ENCODE measurements at regions of chr4 and their contacts with region 1.

Region 1: DNA sequence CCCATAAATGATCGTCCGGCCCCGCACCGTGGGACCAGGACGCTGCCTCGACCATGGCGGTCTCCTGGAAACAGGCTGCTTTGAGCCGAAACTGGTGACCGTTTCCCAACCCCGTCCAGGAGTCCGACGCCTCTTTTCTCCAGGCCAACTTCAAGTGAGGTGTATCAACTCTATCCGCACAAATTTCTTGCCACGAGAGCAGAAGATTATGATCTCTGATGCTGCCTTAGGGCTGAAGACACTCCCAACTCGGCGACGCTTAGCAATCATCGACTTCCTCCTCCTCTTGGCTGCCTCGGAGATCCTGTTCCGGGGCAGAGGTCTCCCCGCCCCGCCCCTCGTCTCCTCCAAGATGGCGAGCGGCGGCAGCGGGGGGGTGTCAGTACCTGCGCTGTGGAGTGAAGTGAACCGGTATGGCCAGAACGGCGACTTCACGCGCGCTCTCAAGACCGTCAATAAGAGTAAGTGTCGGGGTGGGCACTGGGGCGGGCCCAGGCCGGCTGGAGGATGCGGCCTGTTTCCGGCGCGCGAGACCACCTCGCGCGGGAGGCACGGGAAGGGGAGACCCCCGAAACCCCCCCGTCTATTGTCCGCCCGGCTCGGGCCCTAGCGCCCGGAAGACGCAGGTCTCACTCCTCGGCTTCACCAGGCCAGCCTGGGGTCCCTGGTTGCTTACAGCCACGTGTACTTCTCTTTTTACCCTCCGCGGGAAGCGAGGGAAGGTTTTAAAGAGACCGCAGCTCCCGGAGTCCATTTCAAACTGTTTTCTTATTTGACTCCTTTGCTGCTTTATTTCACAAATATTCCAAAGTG is at the start of gene SRP72:
- DNase-seq: peak; percentile 91 to 92
- H3K4me3 ChIP-seq: peak within 1 kb of the TSS; percentile 78 to 99
- H3K27ac ChIP-seq: peak within 1 kb of the TSS; percentile 88 to 93
- H3K4me1 ChIP-seq: peaks cover 0 to 40% (median 24%) of the 10 kb centered on the region in 4 donors
- H3K27me3 ChIP-seq: no peaks in the 10 kb centered on the region
- CTCF ChIP-seq: no peak

Region 2: DNA sequence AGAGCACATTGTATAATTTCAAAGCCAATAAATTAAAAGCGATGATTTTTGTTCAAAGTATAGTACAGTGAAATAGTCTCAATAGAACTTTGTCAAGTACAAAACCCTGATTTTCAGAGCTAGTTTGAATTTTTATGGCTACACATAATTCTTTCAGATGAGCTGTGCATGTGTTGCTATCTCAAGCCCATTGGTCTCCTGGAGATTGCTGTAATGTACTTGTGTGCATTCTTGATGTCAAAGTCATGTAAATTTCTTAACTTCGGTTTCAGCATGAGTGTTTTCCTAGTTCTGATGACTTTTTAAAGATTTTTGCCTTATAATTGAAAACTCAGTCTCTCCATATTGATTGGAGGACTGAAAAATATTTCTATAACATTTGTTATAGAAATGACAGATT is 317.9 kb before region 1 on chr4:
- intact Hi-C with region 1: no loop called
- DNase-seq: no peak
- H3K4me3 ChIP-seq: no peak overlapping the region
- H3K27ac ChIP-seq: no peak overlapping the region
- H3K4me1 ChIP-seq: peaks cover 0 to 6% (median 0%) of the 10 kb centered on the region in 4 donors
- H3K27me3 ChIP-seq: no peaks in the 10 kb centered on the region
- CTCF ChIP-seq: no peak

Region 3: GRCh38 chr4:56410235-56411062 is 57.0 kb before region 1 on chr4:
- intact Hi-C with region 1: loop called (anchors 10 kb)
- DNase-seq: peak in 1 of 2 donors; percentile 51
- H3K4me3 ChIP-seq: peak overlapping the region; percentile 37 to 38
- H3K27ac ChIP-seq: peak overlapping the region; percentile 46 to 60
- H3K4me1 ChIP-seq: peaks cover 0 to 20% (median 5%) of the 10 kb centered on the region in 4 donors
- H3K27me3 ChIP-seq: no peaks in the 10 kb centered on the region
- CTCF ChIP-seq: no peak

Region 4: GRCh38 chr4:56435306-56435926 is 32.1 kb before region 1 on chr4 and contains the start of gene PPAT:
- intact Hi-C with region 1: loop called (anchors 2 kb)
- DNase-seq: peak; percentile 97 to 99
- H3K4me3 ChIP-seq: peak within 1 kb of the TSS; percentile 80 to 82
- H3K27ac ChIP-seq: peak within 1 kb of the TSS; percentile 84 to 92
- H3K4me1 ChIP-seq: peaks cover 0 to 22% (median 10%) of the 10 kb centered on the region in 4 donors
- H3K27me3 ChIP-seq: no peaks in the 10 kb centered on the region
- CTCF ChIP-seq: peak in 1 of 2 experiments; percentile 46

Region 5: GRCh38 chr4:56813358-56813757 is 345.9 kb after region 1 on chr4:
- intact Hi-C with region 1: no loop called
- DNase-seq: no peak
- H3K4me3 ChIP-seq: no peak overlapping the region
- H3K27ac ChIP-seq: no peak overlapping the region
- H3K4me1 ChIP-seq: no peaks in the 10 kb centered on the region
- H3K27me3 ChIP-seq: no peaks in the 10 kb centered on the region
- CTCF ChIP-seq: no peak

Measured in tibial artery (tissue), 4 donors.